Brain microvascular endothelial cell (primary cell): ENCODE measurements at regions of chr20 and their contacts with region 1.

Region 1: GRCh38 chr20:33606118-33606771 is 55.9 kb upstream of the C20orf144 start:
- DNase-seq: no peak
- H3K4me3 ChIP-seq: no peak overlapping the region
- H3K27ac ChIP-seq: no peak overlapping the region
- H3K27me3 ChIP-seq: no peaks in the 10 kb centered on the region
- CTCF ChIP-seq: no peak

Region 2: DNA sequence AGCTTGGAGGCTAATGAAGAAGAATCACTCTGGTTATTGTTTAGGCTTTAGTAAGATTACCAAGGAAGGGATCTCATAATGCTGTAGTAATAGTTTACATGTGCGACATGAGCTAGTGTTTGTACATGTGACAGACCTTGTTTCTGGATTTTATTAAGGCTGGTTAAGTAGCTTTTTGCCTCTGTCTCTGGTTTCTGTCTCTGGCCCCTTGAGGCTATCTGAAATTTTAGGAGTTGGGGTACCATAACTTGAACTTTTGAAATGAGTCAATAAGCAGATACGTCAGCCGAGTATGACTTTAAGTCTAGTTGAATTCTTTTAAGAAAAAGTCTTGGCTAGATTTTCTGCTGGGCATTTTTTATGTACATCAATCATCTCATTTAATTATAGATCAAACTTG is 106.9 kb before region 1 on chr20:
- in situ Hi-C with region 1: no loop called
- DNase-seq: no peak
- H3K4me3 ChIP-seq: no peak overlapping the region
- H3K27ac ChIP-seq: no peak overlapping the region
- H3K27me3 ChIP-seq: no peaks in the 10 kb centered on the region
- CTCF ChIP-seq: no peak

Region 3: DNA sequence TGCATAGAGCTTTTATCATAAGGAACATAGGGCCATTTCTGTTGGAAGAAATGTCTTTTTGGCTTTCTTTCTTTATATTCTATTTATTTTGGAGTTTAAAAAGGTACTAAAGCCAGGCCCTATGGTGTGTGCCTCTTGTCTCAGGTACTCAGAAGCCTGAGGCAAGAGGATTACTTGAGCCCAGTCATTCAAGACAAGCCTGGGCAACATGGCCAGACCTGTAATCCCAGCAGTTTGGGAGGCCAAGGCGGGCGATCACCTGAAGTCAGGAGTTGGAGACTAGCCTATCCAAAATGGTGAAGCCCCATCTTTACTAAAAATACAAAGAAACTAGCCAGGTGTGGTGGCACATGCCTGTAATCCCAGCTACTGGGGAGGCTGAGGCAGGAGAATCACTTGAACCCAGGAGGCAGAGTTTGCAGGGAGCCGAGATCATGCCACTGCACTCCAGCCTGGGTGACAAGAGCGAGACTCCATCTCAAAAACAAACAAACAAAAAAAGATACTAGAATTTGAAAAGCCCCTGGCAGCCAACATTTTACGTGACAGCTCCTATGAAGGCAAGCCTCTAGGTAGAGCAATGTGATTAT is 36.3 kb before region 1 on chr20:
- in situ Hi-C with region 1: loop called (anchors 5 kb)
- DNase-seq: no peak
- H3K4me3 ChIP-seq: no peak overlapping the region
- H3K27ac ChIP-seq: no peak overlapping the region
- H3K27me3 ChIP-seq: no peaks in the 10 kb centered on the region
- CTCF ChIP-seq: no peak

Region 4: DNA sequence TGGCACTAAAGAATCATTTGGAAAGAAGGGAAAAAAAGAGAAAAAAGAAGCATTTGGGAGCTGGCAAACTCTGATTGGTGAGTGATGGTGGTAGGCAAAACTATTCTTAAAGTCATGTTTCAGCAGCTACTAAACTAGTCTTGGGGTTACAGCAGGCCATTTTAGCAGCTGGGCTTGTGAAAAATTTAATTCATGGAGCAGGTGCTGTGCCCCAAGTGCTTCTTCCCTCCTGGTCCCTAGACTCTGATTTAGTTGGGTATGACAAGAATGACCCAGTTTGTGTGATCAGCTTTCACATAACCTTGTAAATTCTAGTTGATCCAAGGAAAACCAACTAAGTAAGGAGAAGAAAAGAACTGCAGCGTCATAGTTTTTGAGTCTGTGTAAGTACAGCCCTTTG is 633.9 kb after region 1 on chr20:
- in situ Hi-C with region 1: no loop called
- DNase-seq: no peak
- H3K4me3 ChIP-seq: no peak overlapping the region
- H3K27ac ChIP-seq: no peak overlapping the region
- H3K27me3 ChIP-seq: peaks cover 4% of the 10 kb centered on the region
- CTCF ChIP-seq: no peak